PC-3 (cell line): ENCODE measurements at regions of chr6 and their contacts with region 1.

Region 1: DNA sequence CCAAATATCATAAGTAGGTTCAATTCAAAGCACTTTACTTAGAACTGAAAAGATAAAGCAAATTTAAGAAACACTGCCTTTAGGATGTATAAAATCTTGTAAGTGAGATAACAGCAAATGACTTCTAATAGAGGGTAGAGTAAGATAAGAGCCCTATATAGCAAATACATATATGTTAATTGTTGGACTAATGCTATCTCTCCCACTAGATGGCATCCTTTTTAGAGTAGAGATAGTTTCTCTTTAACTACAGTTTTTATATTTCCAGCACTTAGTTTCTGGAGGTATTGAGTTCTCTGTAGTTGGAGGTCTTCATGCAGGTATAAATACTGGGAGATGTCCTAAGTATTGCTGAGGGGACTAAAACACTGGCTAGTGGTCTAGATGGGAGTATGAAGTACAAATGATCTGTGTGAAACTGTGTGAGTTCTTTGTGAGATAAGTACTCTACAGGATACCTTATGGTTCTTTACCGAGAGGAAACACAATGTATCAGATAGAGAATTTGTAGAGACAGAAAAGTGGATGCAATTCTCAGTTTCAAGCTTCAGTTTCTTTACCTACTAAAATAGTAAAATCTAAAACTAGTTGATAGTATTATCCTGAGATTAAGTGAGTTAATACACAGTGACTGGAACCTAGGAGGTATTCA is 399.3 kb downstream of the KHDRBS2 start:
- DNase-seq: peak; percentile 17
- ATAC-seq: no peak
- H3K4me3 ChIP-seq: no peak overlapping the region
- H3K27ac ChIP-seq: no peak overlapping the region
- H3K4me1 ChIP-seq: no peaks in the 10 kb centered on the region
- H3K27me3 ChIP-seq: no peaks in the 10 kb centered on the region
- CTCF ChIP-seq: peak; percentile 45

Region 2: DNA sequence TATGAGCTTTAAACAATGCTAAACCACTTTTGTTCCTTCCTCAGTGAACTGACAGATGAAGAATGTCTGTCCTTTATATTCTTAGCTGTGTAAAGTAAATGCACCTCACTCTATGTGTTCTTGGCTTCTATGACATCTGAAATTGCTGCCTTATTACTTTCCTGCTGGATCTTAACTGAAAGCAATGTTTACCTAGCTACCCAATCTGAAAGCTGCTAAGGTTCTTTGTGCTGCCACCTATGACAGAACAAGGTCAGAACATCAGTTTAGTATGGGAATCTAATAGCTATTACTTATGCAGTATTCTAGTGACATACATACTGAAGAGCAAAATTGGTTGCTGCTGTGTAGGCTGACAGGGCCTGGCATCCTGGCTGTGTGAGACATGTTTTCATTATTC is 44.8 kb before region 1 on chr6:
- CTCF ChIA-PET with region 1: no interaction called
- POLR2A ChIA-PET with region 1: no interaction called
- intact Hi-C with region 1: no loop called
- DNase-seq: no peak
- ATAC-seq: peak; percentile 13; the same call in 1 of the 2 replicates
- H3K4me3 ChIP-seq: no peak overlapping the region
- H3K27ac ChIP-seq: no peak overlapping the region
- H3K4me1 ChIP-seq: no peaks in the 10 kb centered on the region
- H3K27me3 ChIP-seq: no peaks in the 10 kb centered on the region
- CTCF ChIP-seq: no peak

Region 3: GRCh38 chr6:62150048-62150663 is 263.4 kb after region 1 on chr6:
- CTCF ChIA-PET with region 1: no interaction called
- POLR2A ChIA-PET with region 1: no interaction called
- intact Hi-C with region 1: loop called (anchors 5 kb)
- DNase-seq: peak; percentile 47
- ATAC-seq: no peak
- H3K4me3 ChIP-seq: no peak overlapping the region
- H3K27ac ChIP-seq: no peak overlapping the region
- H3K4me1 ChIP-seq: no peaks in the 10 kb centered on the region
- H3K27me3 ChIP-seq: no peaks in the 10 kb centered on the region
- CTCF ChIP-seq: peak; percentile 68